K562 (cell line): ENCODE measurements at regions of chr14 and their contacts with region 1.

Region 1: DNA sequence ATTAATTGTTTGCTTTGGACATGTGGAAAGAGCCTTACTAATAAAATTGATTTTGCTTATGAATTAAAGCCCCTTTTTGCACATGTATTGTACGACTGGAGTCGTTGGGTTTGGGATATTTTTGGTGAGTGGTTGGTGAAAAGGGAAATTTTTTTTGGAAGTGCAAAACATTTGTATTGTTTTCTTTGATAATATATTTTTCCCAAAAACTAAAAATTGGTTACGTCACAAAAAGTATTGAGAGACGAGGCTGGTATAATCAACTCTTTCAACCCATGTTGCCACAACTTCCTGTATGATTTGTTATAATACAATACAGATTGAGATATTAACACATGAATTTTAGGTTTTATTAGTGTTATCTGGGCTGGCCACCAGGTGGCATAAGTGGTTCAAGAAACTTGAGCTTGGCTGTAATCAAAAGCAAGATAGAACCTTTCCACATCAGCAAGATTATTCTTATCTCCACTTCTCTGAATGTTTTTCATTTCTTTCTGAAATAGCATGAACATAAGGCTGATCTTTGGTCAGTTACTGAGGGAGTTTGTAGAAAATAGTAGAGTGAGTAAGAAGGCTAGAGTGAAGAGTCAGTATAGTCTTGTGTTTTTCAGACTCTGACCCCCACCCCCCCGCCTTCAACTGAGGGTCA is 8.7 kb downstream of the NGDN start:
- DNase-seq: peak; percentile 20 to 51 (median 26)
- ATAC-seq: peak; percentile 55; the same call in 2 of the 3 replicates
- H3K4me3 ChIP-seq: no peak overlapping the region
- H3K27ac ChIP-seq: no peak overlapping the region
- H3K4me1 ChIP-seq: no peaks in the 10 kb centered on the region
- H3K27me3 ChIP-seq: no peaks in the 10 kb centered on the region
- CTCF ChIP-seq: peak; percentile 46 to 65 (median 53); a peak in 5 of 6 replicates
- EP300 ChIP-seq: no peak
- POLR2A ChIP-seq: no peak
- RAD21 ChIP-seq: peak; percentile 67 to 77

Region 2: DNA sequence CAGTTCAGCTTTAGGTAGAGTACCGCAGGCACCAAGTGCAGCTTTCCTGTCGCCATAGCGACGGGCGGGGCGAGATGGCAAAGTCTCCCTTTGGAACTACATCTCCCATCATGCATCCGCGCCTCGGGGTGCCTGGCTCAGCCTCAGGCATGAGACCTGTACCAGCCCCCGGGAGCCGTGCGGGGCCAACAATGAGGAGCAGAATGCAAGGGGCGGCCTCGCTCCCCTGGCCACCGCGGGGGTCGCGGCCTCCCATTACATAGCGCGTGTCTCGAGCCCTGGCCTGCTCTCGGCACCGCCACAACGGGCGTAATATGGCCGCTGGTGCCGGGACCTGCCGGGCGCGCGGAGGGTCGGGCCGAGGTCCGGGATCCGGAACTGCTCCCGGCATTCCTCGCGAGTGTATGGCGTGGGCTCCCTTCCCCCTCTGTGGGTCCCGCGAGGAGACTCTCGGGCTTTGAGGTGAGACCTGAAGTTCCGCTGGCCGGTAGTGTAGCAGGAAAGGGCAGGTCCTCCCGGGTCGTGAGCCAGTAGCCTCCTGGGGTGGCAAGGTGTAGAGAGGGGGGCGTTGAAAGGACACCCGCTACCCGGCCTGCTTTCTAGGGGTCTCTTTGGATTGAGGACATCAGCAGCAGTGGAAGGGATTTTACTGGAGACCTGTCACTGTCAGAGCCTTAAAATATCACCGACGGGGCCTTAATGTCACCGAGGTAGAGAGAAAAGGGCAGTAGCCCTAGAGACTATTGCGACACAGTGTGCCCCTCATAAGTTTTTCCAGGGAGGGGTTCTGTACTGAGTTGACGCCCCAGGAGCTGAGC is 77.9 kb after region 1 on chr14 and contains the start of gene THTPA:
- CTCF ChIA-PET with region 1: interaction called, 22 read pairs
- POLR2A ChIA-PET with region 1: interaction called, 5 read pairs
- in situ Hi-C with region 1: no loop called
- intact Hi-C with region 1: loop called (anchors 1 kb)
- DNase-seq: peak; percentile 80 to 90 (median 85)
- ATAC-seq: peak; percentile 89
- H3K4me3 ChIP-seq: peak within 1 kb of the TSS; percentile 68
- H3K27ac ChIP-seq: peak within 1 kb of the TSS; percentile 76
- H3K4me1 ChIP-seq: peaks cover 7 to 21% of the 10 kb centered on the region in 2 experiments; a peak in 3 of 5 replicates
- H3K27me3 ChIP-seq: no peaks in the 10 kb centered on the region
- CTCF ChIP-seq: no peak
- EP300 ChIP-seq: no peak
- POLR2A ChIP-seq: peak; percentile 82
- RAD21 ChIP-seq: no peak
- polyA plus RNA-seq, gene THTPA: 6.4 to 6.5 TPM

Region 3: GRCh38 chr14:23567192-23568020 is 89.2 kb after region 1 on chr14 and contains the start of gene AP1G2:
- CTCF ChIA-PET with region 1: interaction called, 22 read pairs
- POLR2A ChIA-PET with region 1: interaction called, 3 read pairs
- in situ Hi-C with region 1: no loop called
- intact Hi-C with region 1: no loop called
- DNase-seq: peak; percentile 89 to 93 (median 90)
- ATAC-seq: peak; percentile 97
- H3K4me3 ChIP-seq: peak within 1 kb of the TSS; percentile 71
- H3K27ac ChIP-seq: peak within 1 kb of the TSS; percentile 48
- H3K4me1 ChIP-seq: peaks cover 12 to 36% of the 10 kb centered on the region in 2 experiments; a peak in 4 of 5 replicates
- H3K27me3 ChIP-seq: no peaks in the 10 kb centered on the region
- CTCF ChIP-seq: no peak
- EP300 ChIP-seq: no peak
- POLR2A ChIP-seq: peak; percentile 87
- RAD21 ChIP-seq: no peak
- polyA plus RNA-seq, gene AP1G2: 22.9 to 33.3 TPM